Heart right ventricle (tissue), 16 donors: ENCODE measurements at regions of chr3 and their contacts with region 1.

Region 1: DNA sequence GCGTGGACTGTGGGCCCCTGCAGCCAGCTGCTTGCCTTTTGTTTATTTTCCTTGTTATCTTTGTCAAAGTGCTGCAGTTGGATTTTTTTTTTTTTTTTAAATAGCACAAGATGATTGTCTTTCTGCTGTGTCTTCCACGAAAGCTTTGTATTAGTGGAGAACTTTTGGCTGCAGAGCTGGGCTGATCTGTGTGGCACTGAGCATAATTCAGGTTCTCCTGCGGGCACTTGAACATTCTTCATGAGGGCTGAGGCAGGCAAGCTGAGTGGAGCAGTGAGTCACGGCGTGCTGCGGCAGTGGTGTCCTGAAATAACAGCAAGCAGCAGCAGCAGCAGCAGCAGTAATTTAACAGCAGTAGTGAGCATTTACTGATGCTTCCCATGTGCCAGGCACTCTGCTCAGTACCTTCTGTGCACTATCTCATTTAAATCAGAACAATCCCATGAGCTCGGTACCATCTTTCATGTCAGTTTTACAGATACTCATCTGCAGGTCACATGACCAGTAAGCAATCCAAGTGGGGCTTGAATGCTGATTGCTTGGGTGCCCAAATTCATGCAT is 45.8 kb downstream of the MITF start:
- DNase-seq: peak; percentile 41 to 46
- ATAC-seq: peak; percentile 66 to 93 (median 84)
- H3K4me3 ChIP-seq: no peak overlapping the region
- H3K27ac ChIP-seq: peak overlapping the region in 7 of 10 donors; percentile 7 to 63 (median 44)
- H3K4me1 ChIP-seq: peaks cover 12 to 75% (median 41%) of the 10 kb centered on the region in 9 donors
- H3K27me3 ChIP-seq: no peaks in the 10 kb centered on the region
- CTCF ChIP-seq: no peak

Region 2: GRCh38 chr3:69250014-69250413 is 535.0 kb before region 1 on chr3:
- intact Hi-C with region 1: no loop called
- DNase-seq: peak in 1 of 2 donors; percentile 32
- ATAC-seq: peak in 7 of 8 donors; percentile 46 to 71 (median 54)
- H3K4me3 ChIP-seq: peak overlapping the region in 6 of 10 donors; percentile 5 to 35 (median 22)
- H3K27ac ChIP-seq: no peak overlapping the region
- H3K4me1 ChIP-seq: peaks cover 0 to 6% (median 0%) of the 10 kb centered on the region in 9 donors
- H3K27me3 ChIP-seq: no peaks in the 10 kb centered on the region
- CTCF ChIP-seq: no peak

Region 3: GRCh38 chr3:69739204-69740102 is 45.6 kb before region 1 on chr3 and contains the start of gene MITF:
- intact Hi-C with region 1: loop called in 5 of 10 experiments (anchors 5 kb)
- DNase-seq: peak; percentile 92 to 94
- ATAC-seq: peak; percentile 96 to 99 (median 98)
- H3K4me3 ChIP-seq: peak within 1 kb of the TSS; percentile 76 to 98 (median 92)
- H3K27ac ChIP-seq: peak within 1 kb of the TSS; percentile 84 to 96 (median 92)
- H3K4me1 ChIP-seq: peaks cover 0 to 55% (median 14%) of the 10 kb centered on the region in 9 donors
- H3K27me3 ChIP-seq: peaks cover 0 to 6% (median 0%) of the 10 kb centered on the region in 7 donors
- CTCF ChIP-seq: no peak
- total RNA-seq, gene MITF: 53.7 to 101 (median 87.0) TPM

Region 4: GRCh38 chr3:69747511-69748258 is 37.3 kb before region 1 on chr3:
- intact Hi-C with region 1: loop called in 5 of 10 experiments (anchors 5 kb)
- DNase-seq: no peak
- ATAC-seq: no peak
- H3K4me3 ChIP-seq: no peak overlapping the region
- H3K27ac ChIP-seq: peak overlapping the region in 5 of 10 donors; percentile 5 to 77 (median 36)
- H3K4me1 ChIP-seq: peaks cover 11 to 95% (median 78%) of the 10 kb centered on the region in 9 donors
- H3K27me3 ChIP-seq: no peaks in the 10 kb centered on the region
- CTCF ChIP-seq: no peak